Ascending aorta (tissue), 2 donors: ENCODE measurements at regions of chr13 and their contacts with region 1.

Region 1: GRCh38 chr13:35157143-35157755 is 215.2 kb downstream of the NBEA start:
- DNase-seq: no peak
- H3K4me3 ChIP-seq: no peak overlapping the region
- H3K27ac ChIP-seq: no peak overlapping the region
- H3K4me1 ChIP-seq: no peaks in the 10 kb centered on the region
- H3K27me3 ChIP-seq: no peaks in the 10 kb centered on the region
- CTCF ChIP-seq: peak; percentile 34 to 73 (median 50)

Region 2: DNA sequence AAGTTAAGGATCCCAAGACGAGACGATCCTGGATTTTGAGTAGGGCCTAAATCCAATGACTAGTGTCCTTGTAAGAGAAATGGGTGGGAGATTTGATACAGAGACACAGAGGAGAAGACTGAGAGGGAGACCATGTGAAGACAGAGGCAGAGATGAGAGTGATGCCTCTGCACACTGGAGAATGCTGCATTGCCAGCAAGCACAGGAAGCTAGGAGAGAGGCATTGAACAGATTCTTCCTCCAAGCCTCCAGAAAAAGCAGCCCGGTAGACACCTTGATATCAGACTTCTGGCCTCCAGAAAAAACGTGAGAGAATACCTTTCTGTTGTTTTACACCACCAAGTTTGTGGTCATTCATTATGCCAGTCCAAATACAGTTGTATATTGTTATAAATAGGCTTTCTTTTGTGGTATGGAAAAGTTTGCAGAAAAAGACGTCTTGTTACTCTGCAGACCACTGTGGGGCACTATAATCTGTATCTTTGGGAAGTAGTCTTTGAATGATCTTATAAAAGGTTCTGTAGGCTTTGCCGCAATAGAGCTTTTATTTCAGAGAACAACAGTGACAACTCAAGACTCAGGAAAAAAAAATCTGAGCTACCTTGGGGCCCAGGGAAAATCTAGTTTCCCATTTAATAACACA is 1357.2 kb before region 1 on chr13:
- intact Hi-C with region 1: loop called (anchors 5 kb)
- DNase-seq: no peak
- H3K4me3 ChIP-seq: peak overlapping the region in 1 of 2 donors; percentile 44
- H3K27ac ChIP-seq: no peak overlapping the region
- H3K4me1 ChIP-seq: no peaks in the 10 kb centered on the region
- H3K27me3 ChIP-seq: no peaks in the 10 kb centered on the region
- CTCF ChIP-seq: peak in 2 of 3 experiments; percentile 34 to 52

Region 3: GRCh38 chr13:33931397-33932311 is 1225.6 kb before region 1 on chr13:
- intact Hi-C with region 1: loop called (anchors 2 kb)
- DNase-seq: no peak
- H3K4me3 ChIP-seq: no peak overlapping the region
- H3K27ac ChIP-seq: no peak overlapping the region
- H3K4me1 ChIP-seq: no peaks in the 10 kb centered on the region
- H3K27me3 ChIP-seq: no peaks in the 10 kb centered on the region
- CTCF ChIP-seq: peak in 2 of 3 experiments; percentile 32 to 61

Region 4: GRCh38 chr13:34591900-34592529 is 565.2 kb before region 1 on chr13:
- intact Hi-C with region 1: no loop called
- DNase-seq: no peak
- H3K4me3 ChIP-seq: no peak overlapping the region
- H3K27ac ChIP-seq: no peak overlapping the region
- H3K4me1 ChIP-seq: no peaks in the 10 kb centered on the region
- H3K27me3 ChIP-seq: no peaks in the 10 kb centered on the region
- CTCF ChIP-seq: no peak